ENCODE measurements at regions of chr9 and their contacts with region 1.

Region 1: DNA sequence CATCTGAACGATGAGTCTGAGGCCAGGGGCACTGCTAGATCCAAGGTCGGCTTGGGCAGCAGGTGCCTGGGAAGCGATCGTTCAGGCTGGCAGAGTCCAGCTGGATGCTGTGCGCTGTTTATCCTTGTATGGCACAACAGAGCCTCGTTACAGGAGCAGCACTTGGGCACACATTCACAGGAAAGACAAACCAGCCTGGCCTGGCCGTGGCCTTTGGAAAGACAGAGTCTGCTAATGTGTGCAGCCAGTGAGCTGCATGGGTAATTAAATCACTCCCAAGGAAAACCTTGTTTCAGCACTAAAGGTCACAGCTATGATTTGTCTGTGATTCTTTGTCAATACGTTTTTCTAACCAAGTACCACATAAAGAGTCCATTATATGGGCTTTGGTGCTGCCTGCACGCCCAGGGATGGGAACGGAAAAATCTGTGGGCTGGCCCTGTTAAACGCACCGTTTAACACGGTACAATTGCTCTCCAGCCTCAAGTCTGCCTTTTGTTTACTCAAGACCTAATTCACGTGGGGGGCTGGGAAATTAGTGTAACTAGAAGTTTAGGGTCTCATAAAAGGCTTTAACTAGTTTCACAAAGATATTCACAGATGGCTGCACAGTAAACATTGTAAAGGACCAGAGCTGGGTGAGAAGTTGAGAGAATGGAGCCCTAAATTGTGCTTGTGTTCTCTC is 509.3 kb downstream of the KDM4C start:
- DNase-seq: no peak
- ATAC-seq: no peak
- H3K4me3 ChIP-seq: no peak overlapping the region
- H3K27ac ChIP-seq: no peak overlapping the region
- H3K4me1 ChIP-seq: no peaks in the 10 kb centered on the region
- H3K27me3 ChIP-seq: peaks cover 0 to 9% (median 0%) of the 10 kb centered on the region in 7 donors
- CTCF ChIP-seq: no peak

Region 2: DNA sequence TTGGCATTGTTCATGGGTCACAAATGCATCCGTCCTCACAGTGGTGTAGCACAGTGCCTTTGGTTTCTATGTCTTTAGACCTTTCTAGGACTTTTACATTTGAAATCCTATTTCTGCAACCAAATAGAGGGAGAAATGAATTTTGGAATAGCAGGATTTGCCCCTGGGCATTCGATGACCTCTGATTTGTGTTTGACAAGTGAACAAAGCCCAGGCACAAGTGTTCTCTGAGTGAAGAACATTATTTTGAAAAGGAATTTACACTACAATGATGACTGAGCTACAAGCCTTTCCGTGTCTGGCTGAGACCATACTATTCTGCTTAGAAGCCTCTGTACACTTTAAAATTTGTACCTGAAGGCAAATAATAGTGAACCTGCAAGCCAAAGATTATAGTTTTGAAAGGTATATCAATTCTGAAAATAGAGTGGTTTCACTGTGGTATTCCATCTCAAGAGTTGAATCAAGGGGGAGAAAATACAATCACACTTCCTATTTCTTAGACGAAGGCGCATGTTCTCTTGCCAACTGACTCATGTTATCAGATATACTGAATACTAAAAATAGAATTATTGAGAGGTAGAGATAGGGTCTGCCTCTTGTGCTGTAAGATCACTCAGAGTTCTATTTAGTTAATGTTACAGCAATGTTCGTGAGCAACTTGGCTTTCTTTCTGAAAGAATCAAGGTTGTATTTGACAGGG is 211.7 kb before region 1 on chr9:
- intact Hi-C with region 1: loop called in 1 of 10 experiments (anchors 10 kb)
- DNase-seq: no peak
- ATAC-seq: no peak
- H3K4me3 ChIP-seq: no peak overlapping the region
- H3K27ac ChIP-seq: no peak overlapping the region
- H3K4me1 ChIP-seq: peaks cover 0 to 9% (median 0%) of the 10 kb centered on the region in 9 donors
- H3K27me3 ChIP-seq: no peaks in the 10 kb centered on the region
- CTCF ChIP-seq: no peak

Region 3: GRCh38 chr9:7223981-7224380 is 43.1 kb before region 1 on chr9:
- intact Hi-C with region 1: no loop called
- DNase-seq: no peak
- ATAC-seq: no peak
- H3K4me3 ChIP-seq: no peak overlapping the region
- H3K27ac ChIP-seq: no peak overlapping the region
- H3K4me1 ChIP-seq: no peaks in the 10 kb centered on the region
- H3K27me3 ChIP-seq: peaks cover 0 to 13% (median 0%) of the 10 kb centered on the region in 7 donors
- CTCF ChIP-seq: no peak

Region 4: GRCh38 chr9:7549249-7549648 is 282.2 kb after region 1 on chr9:
- intact Hi-C with region 1: loop called in 1 of 10 experiments (anchors 10 kb)
- DNase-seq: peak; percentile 21 to 35
- ATAC-seq: peak in 7 of 8 donors; percentile 14 to 82 (median 56)
- H3K4me3 ChIP-seq: no peak overlapping the region
- H3K27ac ChIP-seq: no peak overlapping the region
- H3K4me1 ChIP-seq: peaks cover 0 to 6% (median 0%) of the 10 kb centered on the region in 9 donors
- H3K27me3 ChIP-seq: peaks cover 0 to 12% (median 0%) of the 10 kb centered on the region in 7 donors
- CTCF ChIP-seq: no peak

Measured in heart right ventricle (tissue), 16 donors.